A549 (cell line): ENCODE measurements at regions of chr1 and their contacts with region 1.

Region 1: DNA sequence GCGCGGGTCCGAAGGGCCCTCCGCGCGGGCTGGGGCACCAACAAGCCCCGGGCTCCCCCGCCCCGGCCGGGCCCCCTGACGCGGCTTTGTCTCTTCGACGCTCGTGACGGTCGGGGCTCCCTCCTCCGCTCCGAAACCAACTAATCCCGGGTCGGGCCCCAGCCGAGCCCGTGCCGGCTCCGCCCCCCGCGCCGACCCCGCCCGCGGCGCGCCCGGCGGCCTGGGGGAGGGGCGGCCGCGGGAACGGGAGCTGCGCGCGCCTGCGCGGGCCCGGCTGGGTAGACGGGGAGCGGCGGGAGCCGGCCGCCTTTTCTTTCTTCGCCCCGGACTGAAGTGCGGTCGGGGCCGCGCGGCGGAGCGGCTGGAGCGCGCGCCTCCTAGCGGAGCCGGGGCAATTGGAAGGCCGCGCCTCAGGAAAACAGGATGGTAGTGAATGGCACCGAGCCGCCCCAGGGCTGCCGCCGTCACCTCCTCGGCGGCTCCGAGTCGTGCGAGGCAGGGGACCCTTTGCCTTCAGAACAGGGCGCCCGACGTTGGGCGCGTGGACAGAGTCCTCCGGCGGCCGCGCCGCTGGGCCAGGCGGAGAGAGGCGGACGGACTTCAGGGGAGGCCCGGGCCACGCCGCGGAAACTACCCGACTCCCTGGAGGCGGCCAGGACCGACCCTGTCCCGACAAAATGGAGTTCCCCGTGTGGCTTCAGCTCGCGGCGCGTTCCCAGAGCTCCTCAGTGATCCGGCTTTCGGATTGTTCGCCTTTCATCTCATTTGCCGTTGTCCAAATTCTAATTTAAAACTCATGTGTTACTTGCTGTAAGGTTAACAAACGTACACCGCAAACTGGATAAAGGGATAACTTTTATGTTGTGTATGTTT is at the start of gene TP53BP2:
- DNase-seq: peak; percentile 75 to 91
- ATAC-seq: peak; percentile 90 to 93
- H3K4me3 ChIP-seq: peak within 1 kb of the TSS; percentile 86
- H3K27ac ChIP-seq: peak within 1 kb of the TSS; percentile 94 to 97
- H3K4me1 ChIP-seq: peaks cover 25% of the 10 kb centered on the region
- CTCF ChIP-seq: peak; percentile 72
- EP300 ChIP-seq: no peak
- POLR2A ChIP-seq: peak; percentile 64
- RAD21 ChIP-seq: peak; percentile 24 to 66; a peak in 4 of 5 replicates
- polyA plus RNA-seq, gene TP53BP2: 33.0 and 33.5 TPM in 2 replicates

Region 2: DNA sequence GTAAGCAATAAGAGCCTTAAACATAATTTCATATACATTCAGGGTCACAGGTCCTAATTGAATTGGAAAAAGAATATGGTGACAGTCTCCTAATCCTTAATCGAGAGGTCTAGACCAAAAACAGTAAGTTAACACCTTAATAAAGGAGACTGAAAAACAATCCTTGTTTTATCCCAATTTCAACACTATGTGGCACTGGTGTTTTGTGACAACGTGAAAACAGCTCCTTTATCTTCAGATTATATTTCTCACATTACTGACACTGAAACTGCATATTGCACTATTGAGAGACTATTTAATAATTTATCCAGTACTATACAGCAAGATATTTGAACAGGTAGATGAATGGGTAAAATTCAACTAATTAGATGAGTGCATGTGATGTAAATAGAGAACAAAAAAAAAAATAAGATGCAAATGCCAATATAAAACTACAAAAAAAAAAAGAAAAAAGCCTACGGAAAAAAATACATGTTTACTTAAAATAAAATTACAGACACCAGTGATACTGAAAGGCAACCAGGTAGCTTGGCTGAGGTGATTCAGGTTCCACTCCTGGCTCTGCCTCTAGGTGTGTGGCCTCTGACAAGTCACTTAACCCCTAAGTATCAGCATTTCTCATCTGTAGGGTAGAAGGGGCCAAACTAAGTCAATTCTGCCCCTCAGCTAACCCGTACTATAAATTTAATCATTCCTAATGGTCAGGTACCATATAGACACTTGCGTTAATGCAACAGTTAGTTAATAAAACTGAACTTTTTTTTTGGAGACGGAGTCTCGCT is 34.2 kb before region 1 on chr1:
- CTCF ChIA-PET with region 1: interaction called, 29 read pairs
- POLR2A ChIA-PET with region 1: interaction called, 5 read pairs
- DNase-seq: peak in 1 of 2 experiments; percentile 51
- ATAC-seq: peak; percentile 79 to 83
- H3K4me3 ChIP-seq: no peak overlapping the region
- H3K27ac ChIP-seq: no peak overlapping the region
- H3K4me1 ChIP-seq: peaks cover 31% of the 10 kb centered on the region
- CTCF ChIP-seq: peak; percentile 78
- EP300 ChIP-seq: no peak
- POLR2A ChIP-seq: no peak
- RAD21 ChIP-seq: peak; percentile 85 to 88

Region 3: DNA sequence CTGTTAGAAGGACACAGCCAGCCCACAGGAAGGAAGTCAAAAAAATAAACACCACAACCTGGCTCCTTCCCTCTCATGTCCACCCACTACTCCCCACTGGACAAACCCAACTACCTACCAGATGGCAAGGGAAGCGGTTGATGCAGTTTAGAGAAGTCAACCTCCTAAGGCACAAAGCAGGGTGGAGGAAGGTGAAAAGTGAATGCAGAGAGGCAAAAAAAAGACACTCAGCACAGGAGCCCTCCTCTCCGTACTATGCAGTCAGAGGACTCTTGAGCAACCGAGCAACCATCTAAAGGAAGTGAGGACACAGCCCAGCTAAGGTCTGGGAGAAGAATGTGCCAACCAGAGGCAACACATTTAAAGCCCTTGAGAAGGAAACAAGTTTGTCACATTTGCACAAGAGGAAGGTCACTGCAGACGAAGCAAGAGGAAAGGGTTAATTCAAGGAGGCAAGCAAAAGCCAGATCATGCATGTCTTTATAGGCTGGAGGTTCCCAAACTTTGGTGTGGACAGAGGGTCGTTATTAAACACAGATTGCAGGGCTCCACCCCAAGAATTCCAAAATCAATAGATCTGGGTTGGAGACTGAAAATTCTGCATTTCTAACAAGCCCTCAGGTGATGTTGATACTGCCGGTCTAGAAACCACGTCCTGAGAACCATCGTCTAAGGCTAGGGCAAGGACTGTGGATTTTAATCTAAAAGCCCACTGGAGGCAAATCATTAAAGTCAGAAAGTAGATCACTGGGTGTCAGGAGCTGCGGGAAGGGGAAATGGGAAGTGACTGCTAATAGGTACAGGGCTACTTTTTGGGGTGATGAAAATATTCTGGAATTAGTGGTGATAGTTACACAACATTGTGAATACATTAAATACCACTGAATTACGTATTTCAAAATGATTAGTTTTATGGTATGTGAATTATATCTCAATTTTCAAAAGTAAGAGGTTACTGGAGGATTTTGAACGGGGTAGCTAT is 20.0 kb before region 1 on chr1:
- CTCF ChIA-PET with region 1: interaction called, 11 read pairs
- POLR2A ChIA-PET with region 1: interaction called, 5 read pairs
- DNase-seq: no peak
- ATAC-seq: no peak
- H3K4me3 ChIP-seq: no peak overlapping the region
- H3K27ac ChIP-seq: no peak overlapping the region
- H3K4me1 ChIP-seq: peaks cover 2% of the 10 kb centered on the region; the same call in 2 of the 3 replicates
- CTCF ChIP-seq: no peak
- EP300 ChIP-seq: no peak
- POLR2A ChIP-seq: no peak
- RAD21 ChIP-seq: no peak

Region 4: GRCh38 chr1:223860051-223860622 is 14.1 kb after region 1 on chr1:
- CTCF ChIA-PET with region 1: interaction called, 23 read pairs
- POLR2A ChIA-PET with region 1: interaction called, 9 read pairs
- DNase-seq: no peak
- ATAC-seq: peak; percentile 8 to 55; a peak in 3 of 6 replicates
- H3K4me3 ChIP-seq: no peak overlapping the region
- H3K27ac ChIP-seq: no peak overlapping the region
- H3K4me1 ChIP-seq: no peaks in the 10 kb centered on the region
- CTCF ChIP-seq: no peak
- EP300 ChIP-seq: no peak
- POLR2A ChIP-seq: no peak
- RAD21 ChIP-seq: no peak

Region 5: DNA sequence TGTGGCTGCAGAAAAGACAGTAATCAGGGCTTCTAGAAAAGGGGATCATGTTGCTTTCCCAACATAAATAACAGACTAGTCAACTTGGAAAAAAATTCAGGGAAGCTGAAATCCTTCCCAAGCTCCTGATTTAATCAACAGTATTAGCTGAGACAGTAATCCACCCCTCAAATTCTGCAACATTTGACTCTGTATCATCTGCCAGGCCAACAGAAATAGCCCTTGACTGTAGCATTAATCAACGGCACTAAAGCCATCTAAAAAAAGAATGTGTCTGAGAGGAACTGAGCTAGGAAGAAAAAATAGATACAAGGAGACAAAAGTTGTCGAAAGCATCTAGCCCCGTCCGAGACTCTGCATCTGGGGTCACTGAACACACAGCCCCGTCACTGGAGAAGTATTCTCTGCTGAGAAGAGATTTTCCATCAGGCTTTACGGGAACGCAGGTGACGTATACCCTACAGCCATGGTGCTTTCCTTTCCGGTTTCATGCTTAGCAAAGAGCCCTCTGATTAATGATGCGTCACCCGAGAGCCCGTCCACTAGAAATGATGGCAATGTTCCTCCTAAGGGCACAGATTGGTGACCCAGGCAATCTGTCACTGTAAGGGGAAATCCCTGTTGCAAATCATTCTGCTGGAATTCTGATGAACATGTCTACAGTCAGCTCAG is 41.8 kb after region 1 on chr1:
- CTCF ChIA-PET with region 1: interaction called, 8 read pairs
- POLR2A ChIA-PET with region 1: interaction called, 24 read pairs
- DNase-seq: peak; percentile 78 to 89
- ATAC-seq: peak; percentile 97 to 100
- H3K4me3 ChIP-seq: 0 out of 3 replicates have a peak overlapping the region, but pooled peaks have one; percentile 2
- H3K27ac ChIP-seq: peak overlapping the region; percentile 52 to 77
- H3K4me1 ChIP-seq: peaks cover 16% of the 10 kb centered on the region
- CTCF ChIP-seq: no peak
- EP300 ChIP-seq: no peak
- POLR2A ChIP-seq: no peak
- RAD21 ChIP-seq: no peak